Heart left ventricle (tissue), 16 donors: ENCODE measurements at regions of chr7 and their contacts with region 1.

Region 1: DNA sequence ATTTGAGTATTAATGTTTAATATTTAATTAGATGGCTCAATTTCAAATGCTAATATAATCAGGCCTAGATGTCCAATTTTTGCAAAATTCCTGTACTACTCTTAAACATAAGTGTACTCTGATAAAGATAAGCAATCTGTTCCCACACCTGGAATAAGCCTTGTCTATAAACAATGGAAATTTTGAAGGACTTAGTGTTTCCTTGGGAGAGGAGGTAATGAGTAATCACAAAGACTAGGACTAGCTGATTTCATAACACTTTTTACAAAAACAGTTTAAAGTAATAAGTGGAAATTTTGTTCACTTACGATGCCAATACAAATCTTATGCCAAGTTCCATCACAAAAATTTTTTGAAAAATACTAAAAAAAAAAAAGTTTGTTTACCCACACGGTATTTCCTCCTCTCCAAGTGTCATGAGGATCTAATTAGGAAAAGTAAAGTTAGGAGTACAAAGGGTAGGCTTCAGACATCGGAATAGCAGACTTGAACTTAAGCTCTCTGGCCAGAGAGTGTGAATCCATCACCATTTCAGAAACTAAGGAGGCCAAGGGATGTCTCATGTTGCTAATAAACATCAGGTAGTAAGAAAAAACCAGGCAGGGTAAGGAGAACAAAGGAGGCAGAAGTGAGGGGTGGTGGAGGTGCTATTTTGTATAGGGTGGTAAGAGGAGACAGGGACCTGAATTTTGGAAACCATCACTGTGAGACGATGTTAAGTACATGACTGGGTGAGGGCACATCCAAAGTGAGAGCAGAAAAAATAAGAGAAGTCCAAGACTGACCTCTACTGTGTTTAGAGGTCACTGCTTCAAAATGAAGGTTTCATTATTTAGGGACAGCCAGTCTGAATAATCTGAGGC is 61.3 kb downstream of the RAPGEF5 start:
- DNase-seq: no peak
- ATAC-seq: peak in 3 of 4 donors; percentile 50 to 76 (median 64)
- H3K4me3 ChIP-seq: no peak overlapping the region
- H3K27ac ChIP-seq: peak overlapping the region in 1 of 12 donors; percentile 24
- H3K4me1 ChIP-seq: peaks cover 0 to 8% (median 0%) of the 10 kb centered on the region in 12 donors
- H3K27me3 ChIP-seq: no peaks in the 10 kb centered on the region
- CTCF ChIP-seq: peak in 8 of 12 donors; percentile 13 to 50 (median 38)
- POLR2A ChIP-seq: no peak

Region 2: DNA sequence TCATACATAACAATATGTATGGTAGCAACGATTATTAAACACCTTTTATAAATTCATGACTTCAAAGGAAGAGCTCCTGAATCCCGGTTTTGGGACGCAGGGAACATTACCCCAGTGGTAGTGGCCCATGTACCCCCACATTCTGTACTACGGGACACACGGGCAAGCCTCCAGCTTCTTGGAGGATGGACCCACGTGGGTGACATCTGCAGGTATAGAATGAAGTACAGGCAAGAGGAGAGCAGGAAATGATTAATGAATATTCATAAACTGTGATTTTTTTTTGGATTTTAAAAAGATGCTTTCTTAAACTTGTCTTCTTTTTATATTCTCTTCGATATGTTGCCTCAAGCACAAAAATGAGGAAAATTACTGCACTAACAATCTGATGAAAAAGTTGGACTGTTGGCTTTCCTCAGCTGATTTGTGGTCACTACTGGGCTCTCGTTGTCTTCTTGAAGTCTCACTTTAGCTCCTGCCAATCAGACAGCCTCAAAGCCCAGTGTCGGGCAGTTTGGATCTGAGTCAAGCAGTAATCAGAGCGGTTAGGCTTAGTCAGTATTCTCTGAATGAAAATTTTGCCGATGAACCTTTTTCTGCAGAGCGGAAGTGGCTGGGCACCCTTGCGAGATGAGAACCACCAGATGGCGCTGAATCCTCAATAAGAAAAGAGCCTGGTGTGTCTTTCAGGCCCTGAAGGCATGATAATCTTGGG is 192.2 kb before region 1 on chr7:
- intact Hi-C with region 1: loop called in 1 of 10 experiments (anchors 10 kb)
- DNase-seq: peak in 4 of 5 donors; percentile 29 to 58 (median 48)
- ATAC-seq: peak in 3 of 4 donors; percentile 60 to 77 (median 70)
- H3K4me3 ChIP-seq: no peak overlapping the region
- H3K27ac ChIP-seq: no peak overlapping the region
- H3K4me1 ChIP-seq: peaks cover 0 to 4% (median 0%) of the 10 kb centered on the region in 12 donors
- H3K27me3 ChIP-seq: peaks cover 0 to 5% (median 0%) of the 10 kb centered on the region in 9 donors
- CTCF ChIP-seq: peak; percentile 65 to 87 (median 74)
- POLR2A ChIP-seq: no peak

Region 3: GRCh38 chr7:22137466-22137865 is 158.2 kb before region 1 on chr7:
- intact Hi-C with region 1: loop called in 1 of 10 experiments (anchors 10 kb)
- DNase-seq: no peak
- ATAC-seq: no peak
- H3K4me3 ChIP-seq: no peak overlapping the region
- H3K27ac ChIP-seq: no peak overlapping the region
- H3K4me1 ChIP-seq: no peaks in the 10 kb centered on the region
- H3K27me3 ChIP-seq: no peaks in the 10 kb centered on the region
- CTCF ChIP-seq: no peak
- POLR2A ChIP-seq: no peak

Region 4: GRCh38 chr7:22488643-22489462 is 193.2 kb after region 1 on chr7:
- intact Hi-C with region 1: loop called in 6 of 10 experiments (anchors 2 to 10 kb)
- DNase-seq: peak in 4 of 5 donors; percentile 54 to 63 (median 59)
- ATAC-seq: peak in 3 of 4 donors; percentile 80 to 87 (median 85)
- H3K4me3 ChIP-seq: no peak overlapping the region
- H3K27ac ChIP-seq: no peak overlapping the region
- H3K4me1 ChIP-seq: peaks cover 0 to 7% (median 1%) of the 10 kb centered on the region in 12 donors
- H3K27me3 ChIP-seq: peaks cover 0 to 4% (median 0%) of the 10 kb centered on the region in 9 donors
- CTCF ChIP-seq: peak; percentile 84 to 96 (median 88)
- POLR2A ChIP-seq: no peak

Region 5: DNA sequence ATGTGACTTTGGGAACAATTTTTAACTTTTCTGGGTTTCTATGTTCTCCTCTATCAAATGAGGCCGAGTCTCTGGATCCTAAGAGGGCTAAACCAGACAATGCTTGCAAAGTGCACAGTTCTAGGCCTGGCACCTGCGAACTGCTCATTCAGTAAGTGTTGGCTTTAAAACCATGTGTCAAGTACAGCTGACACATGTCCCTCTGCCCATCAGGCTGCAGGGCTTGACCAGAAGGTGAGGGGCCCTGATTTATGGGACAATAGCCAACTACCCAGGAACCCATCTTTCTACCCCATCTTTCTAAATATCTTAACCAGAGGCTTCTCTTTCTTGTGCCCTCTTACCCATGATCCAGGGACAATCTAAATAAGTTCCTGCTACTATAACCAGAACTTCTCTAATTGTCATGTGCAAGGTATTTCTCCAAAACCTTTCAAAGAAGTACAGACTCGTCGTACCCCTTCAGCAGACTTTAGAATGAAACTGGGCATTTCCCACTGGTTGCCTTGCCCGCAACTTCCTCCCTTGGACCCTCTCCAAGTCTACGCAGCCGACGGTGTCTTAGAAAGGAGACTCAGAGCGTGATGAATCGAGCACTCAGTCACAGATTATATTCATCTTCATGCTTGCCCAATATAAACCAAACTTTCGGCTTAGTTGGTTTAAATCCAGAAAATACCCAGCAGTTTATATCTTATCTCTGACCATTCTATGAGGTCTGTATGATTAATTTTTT is 274.1 kb after region 1 on chr7:
- intact Hi-C with region 1: no loop called
- DNase-seq: no peak
- ATAC-seq: peak in 1 of 4 donors; percentile 29
- H3K4me3 ChIP-seq: no peak overlapping the region
- H3K27ac ChIP-seq: no peak overlapping the region
- H3K4me1 ChIP-seq: peaks cover 0 to 43% (median 15%) of the 10 kb centered on the region in 12 donors
- H3K27me3 ChIP-seq: peaks cover 0 to 4% (median 0%) of the 10 kb centered on the region in 9 donors
- CTCF ChIP-seq: no peak
- POLR2A ChIP-seq: no peak